A673 (cell line): ENCODE measurements at regions of chr6 and their contacts with region 1.

Region 1: DNA sequence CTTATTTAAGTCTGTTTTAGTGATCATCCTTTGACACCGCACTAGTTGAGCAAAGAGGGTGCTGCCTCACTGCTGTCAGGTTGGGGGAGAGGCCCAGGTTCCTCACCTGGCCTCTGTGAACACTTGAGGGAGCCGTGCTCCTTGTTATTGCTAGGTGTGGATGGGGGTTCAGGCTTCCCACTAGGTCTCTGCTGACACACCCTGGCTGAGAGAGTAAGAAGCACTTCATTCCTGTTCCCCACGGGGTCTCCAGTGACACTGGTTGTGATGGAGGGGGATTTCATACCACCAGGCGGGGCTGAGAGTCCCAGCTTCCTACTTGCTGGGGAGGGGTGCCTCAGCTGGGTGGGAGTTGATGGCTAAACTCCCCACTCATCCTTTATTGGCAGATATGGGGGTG is 11.1 kb upstream of the NOTCH4 start:
- DNase-seq: no peak
- H3K4me3 ChIP-seq: no peak overlapping the region
- H3K27ac ChIP-seq: no peak overlapping the region
- H3K4me1 ChIP-seq: no peaks in the 10 kb centered on the region
- H3K27me3 ChIP-seq: no peaks in the 10 kb centered on the region
- CTCF ChIP-seq: no peak

Region 2: GRCh38 chr6:32087574-32088486 is 147.1 kb before region 1 on chr6:
- CTCF ChIA-PET with region 1: no interaction called
- POLR2A ChIA-PET with region 1: no interaction called
- intact Hi-C with region 1: no loop called
- DNase-seq: peak; percentile 85
- H3K4me3 ChIP-seq: no peak overlapping the region
- H3K27ac ChIP-seq: no peak overlapping the region
- H3K4me1 ChIP-seq: no peaks in the 10 kb centered on the region
- H3K27me3 ChIP-seq: peaks cover 7% of the 10 kb centered on the region
- CTCF ChIP-seq: peak; percentile 60

Region 3: DNA sequence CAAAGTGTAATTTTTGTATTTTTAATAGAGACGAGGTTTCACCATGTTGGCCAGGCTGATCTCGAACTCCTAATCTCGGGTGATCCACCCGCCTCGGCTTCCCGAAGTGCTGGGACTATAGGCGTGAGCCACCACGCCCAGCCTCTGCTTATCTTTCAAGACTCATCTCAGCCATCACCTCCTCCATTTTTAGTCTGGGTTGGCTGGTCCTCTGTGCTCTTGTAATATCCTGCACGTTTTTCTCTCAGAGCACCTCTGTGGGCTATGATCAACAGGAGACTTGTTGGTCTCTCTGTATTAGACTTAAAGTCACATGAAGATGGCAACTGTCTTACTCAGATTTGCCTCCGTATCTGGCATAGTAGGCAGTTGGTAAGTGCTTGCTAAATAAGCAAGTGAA is 18.6 kb before region 1 on chr6:
- CTCF ChIA-PET with region 1: interaction called, 12 read pairs
- POLR2A ChIA-PET with region 1: no interaction called
- intact Hi-C with region 1: no loop called
- DNase-seq: no peak
- H3K4me3 ChIP-seq: no peak overlapping the region
- H3K27ac ChIP-seq: no peak overlapping the region
- H3K4me1 ChIP-seq: no peaks in the 10 kb centered on the region
- H3K27me3 ChIP-seq: no peaks in the 10 kb centered on the region
- CTCF ChIP-seq: no peak

Region 4: GRCh38 chr6:32255199-32256153 is 20.5 kb after region 1 on chr6:
- CTCF ChIA-PET with region 1: no interaction called
- POLR2A ChIA-PET with region 1: no interaction called
- intact Hi-C with region 1: no loop called
- DNase-seq: peak; percentile 93
- H3K4me3 ChIP-seq: peak overlapping the region; percentile 33
- H3K27ac ChIP-seq: peak overlapping the region; percentile 69
- H3K4me1 ChIP-seq: peaks cover 7% of the 10 kb centered on the region
- H3K27me3 ChIP-seq: no peaks in the 10 kb centered on the region
- CTCF ChIP-seq: peak; percentile 67

Region 5: DNA sequence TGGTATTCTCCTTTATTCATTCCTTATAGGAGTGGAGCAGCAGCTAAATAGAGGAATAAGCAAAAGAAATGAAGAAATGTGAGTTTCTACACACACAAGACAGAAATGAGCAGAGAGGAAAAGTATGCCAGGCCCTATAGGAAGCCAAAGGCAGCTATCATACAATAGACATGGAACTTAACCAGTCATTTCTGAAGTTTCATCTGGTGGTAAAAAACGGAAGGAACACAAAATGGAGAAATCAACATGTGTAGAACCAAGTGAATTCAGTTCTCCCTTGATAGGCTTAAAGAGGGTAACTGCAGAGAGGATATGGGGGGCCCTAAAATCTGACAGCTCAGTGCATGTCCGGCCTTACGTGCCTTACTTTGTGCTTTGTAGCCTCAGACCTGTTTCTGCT is 92.2 kb after region 1 on chr6:
- CTCF ChIA-PET with region 1: no interaction called
- POLR2A ChIA-PET with region 1: no interaction called
- intact Hi-C with region 1: no loop called
- DNase-seq: no peak
- H3K4me3 ChIP-seq: no peak overlapping the region
- H3K27ac ChIP-seq: no peak overlapping the region
- H3K4me1 ChIP-seq: peaks cover 5% of the 10 kb centered on the region
- H3K27me3 ChIP-seq: no peaks in the 10 kb centered on the region
- CTCF ChIP-seq: no peak